ENCODE measurements at regions of chr2 and their contacts with region 1.

Region 1: DNA sequence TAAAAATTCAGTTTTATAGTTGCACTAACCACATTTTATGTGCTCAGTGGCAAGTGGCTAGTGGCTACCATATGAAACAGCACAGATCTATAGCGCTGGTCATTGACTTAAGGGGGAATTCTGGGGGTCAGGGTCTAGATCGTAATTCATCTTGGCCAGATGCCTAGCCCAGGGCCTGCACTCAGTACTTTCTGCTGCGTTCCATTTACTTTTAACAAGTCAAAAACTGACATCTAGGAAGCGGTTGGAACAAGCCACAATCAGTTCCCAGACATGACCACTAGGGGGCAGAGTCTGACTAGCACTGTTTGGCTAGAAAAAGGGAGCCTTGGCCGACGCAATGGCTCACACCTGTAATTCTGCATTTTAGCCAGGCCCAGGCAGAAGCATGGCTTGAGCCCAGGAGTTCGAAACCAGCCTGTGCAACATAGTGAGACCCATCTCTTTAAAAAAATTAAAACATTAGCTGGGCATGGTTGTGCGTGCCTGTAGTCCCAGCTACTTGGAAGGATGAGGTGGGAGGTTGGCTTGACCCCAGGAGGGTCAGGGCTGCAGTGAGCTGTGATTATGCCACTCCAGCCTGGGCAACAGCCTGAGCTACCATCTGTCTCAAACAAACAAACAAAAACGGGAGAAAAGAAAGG is 9.0 kb upstream of the TMBIM1 start:
- DNase-seq: peak; percentile 76 to 93
- H3K4me3 ChIP-seq: no peak overlapping the region
- H3K27ac ChIP-seq: no peak overlapping the region
- H3K4me1 ChIP-seq: no peaks in the 10 kb centered on the region
- H3K27me3 ChIP-seq: no peaks in the 10 kb centered on the region
- CTCF ChIP-seq: peak; percentile 78 to 96 (median 93)
- EP300 ChIP-seq: no peak
- POLR2A ChIP-seq: no peak
- RAD21 ChIP-seq: peak; percentile 96 to 98

Region 2: GRCh38 chr2:218269899-218270720 is 31.2 kb before region 1 on chr2 and contains the starts of genes AAMP and PNKD:
- CTCF ChIA-PET with region 1: interaction called, 24 read pairs
- POLR2A ChIA-PET with region 1: no interaction called
- DNase-seq: peak; percentile 97 to 100
- H3K4me3 ChIP-seq: peak within 1 kb of the TSS; percentile 89 to 95 (median 92)
- H3K27ac ChIP-seq: peak within 1 kb of the TSS; percentile 28; the same call in 1 of the 2 replicates
- H3K4me1 ChIP-seq: peaks cover 0 to 7% (median 4%) of the 10 kb centered on the region in 4 experiments; a peak in 4 of 7 replicates
- H3K27me3 ChIP-seq: no peaks in the 10 kb centered on the region
- CTCF ChIP-seq: no peak
- EP300 ChIP-seq: no peak
- POLR2A ChIP-seq: peak in 1 of 2 experiments; percentile 82; a peak in 2 of 3 replicates
- RAD21 ChIP-seq: no peak
- total RNA-seq, gene AAMP: 119 and 125 TPM in 2 replicates
- total RNA-seq, gene PNKD: 43.9 and 44.4 TPM in 2 replicates

Region 3: GRCh38 chr2:218312267-218312756 is 11.0 kb after region 1 on chr2:
- CTCF ChIA-PET with region 1: interaction called, 21 read pairs
- POLR2A ChIA-PET with region 1: no interaction called
- DNase-seq: no peak
- H3K4me3 ChIP-seq: no peak overlapping the region
- H3K27ac ChIP-seq: no peak overlapping the region
- H3K4me1 ChIP-seq: no peaks in the 10 kb centered on the region
- H3K27me3 ChIP-seq: no peaks in the 10 kb centered on the region
- CTCF ChIP-seq: no peak
- EP300 ChIP-seq: no peak
- POLR2A ChIP-seq: no peak
- RAD21 ChIP-seq: no peak

Region 4: DNA sequence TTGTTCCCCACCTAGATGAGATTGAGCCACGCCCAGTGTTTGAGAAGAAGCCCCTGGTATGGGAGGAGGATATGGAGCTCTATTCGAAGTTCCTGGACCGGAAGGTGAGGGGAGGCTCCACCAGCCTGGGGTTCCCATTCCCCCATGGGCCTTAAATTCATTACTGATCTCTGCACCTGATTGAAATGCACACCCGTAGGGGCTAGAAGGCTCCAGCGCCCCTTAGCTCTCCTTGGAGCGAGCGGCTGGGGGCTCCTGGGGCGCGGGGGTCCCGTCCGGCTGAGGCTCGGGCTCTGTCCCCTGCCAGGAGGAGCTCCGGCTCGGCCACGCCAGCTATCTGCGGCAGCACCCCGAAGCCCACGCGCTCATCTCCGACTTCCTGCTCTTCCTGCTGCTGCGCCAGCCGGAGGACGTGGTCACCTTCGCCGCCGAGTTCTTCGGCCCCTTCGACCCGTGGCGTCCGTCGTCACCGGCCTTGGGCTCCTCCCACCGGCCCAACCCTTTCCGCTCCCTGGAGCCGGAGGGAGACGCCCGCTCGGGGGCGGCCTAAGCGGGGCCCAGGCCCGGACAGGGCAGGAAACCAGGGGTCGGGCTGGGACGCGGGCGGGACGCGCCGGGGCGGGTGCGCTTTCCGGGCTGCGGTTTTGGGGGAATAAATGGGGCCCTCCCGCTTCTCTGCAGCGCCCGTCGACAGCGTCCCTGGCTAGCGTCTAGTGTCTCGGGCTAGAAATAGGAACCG is 66.3 kb after region 1 on chr2:
- CTCF ChIA-PET with region 1: interaction called, 12 read pairs
- POLR2A ChIA-PET with region 1: interaction called, 4 read pairs
- DNase-seq: peak; percentile 34 to 89
- H3K4me3 ChIP-seq: peak overlapping the region; percentile 49 to 71 (median 56)
- H3K27ac ChIP-seq: peak overlapping the region; percentile 46; the same call in 1 of the 2 replicates
- H3K4me1 ChIP-seq: peaks cover 0 to 3% (median 0%) of the 10 kb centered on the region in 4 experiments; a peak in 3 of 7 replicates
- H3K27me3 ChIP-seq: no peaks in the 10 kb centered on the region
- CTCF ChIP-seq: peak in 1 of 3 experiments; percentile 6; a peak in 1 of 4 replicates
- EP300 ChIP-seq: no peak
- POLR2A ChIP-seq: peak in 1 of 2 experiments; percentile 75; a peak in 1 of 3 replicates
- RAD21 ChIP-seq: peak; percentile 3 to 12; a peak in 1 of 4 replicates

Region 5: DNA sequence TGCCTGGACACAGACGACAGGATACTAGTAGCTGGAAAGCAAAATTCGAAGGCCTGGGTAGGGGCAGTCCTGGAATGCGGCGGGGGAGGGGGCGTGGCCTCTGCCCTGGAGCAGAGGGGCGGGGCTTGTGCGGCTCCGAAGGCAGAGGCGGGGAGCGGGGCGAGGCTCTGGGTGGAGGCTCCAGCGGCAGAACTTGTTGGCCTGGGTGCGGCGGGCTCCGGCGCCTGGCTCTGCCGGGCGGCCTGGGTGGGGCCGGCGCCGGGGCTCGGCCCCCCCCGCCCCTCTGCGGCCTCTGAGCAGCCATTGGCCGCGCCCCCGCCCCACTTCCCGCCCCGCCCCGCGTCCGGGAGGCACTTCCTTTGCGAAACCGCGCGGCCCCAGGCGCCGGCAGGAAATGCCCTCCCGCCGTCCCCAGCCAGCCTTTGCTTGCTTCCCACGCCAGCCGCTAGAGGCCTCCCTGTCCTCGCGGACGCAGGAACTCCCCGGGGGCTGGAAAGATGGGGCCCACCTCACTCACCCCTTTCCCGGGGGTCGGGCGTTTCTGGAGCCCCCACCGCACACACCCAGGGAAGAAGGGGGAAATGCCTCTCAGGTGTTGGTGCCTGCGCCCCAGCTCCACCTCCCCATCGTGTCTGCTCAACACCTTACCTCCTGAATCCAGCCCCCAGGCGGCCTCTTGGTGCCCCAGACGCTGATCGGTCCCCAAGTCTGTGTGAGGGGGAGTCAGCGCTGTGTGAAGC is 105.1 kb after region 1 on chr2:
- CTCF ChIA-PET with region 1: interaction called, 13 read pairs
- POLR2A ChIA-PET with region 1: interaction called, 4 read pairs
- DNase-seq: peak; percentile 85 to 98
- H3K4me3 ChIP-seq: peak overlapping the region; percentile 45 to 75 (median 62)
- H3K27ac ChIP-seq: peak overlapping the region; percentile 82; the same call in 1 of the 2 replicates
- H3K4me1 ChIP-seq: peaks cover 12 to 25% (median 19%) of the 10 kb centered on the region in 4 experiments
- H3K27me3 ChIP-seq: no peaks in the 10 kb centered on the region
- CTCF ChIP-seq: peak in 2 of 3 experiments; percentile 73 to 78; a peak in 3 of 4 replicates
- EP300 ChIP-seq: no peak
- POLR2A ChIP-seq: no peak
- RAD21 ChIP-seq: peak; percentile 80